ENCODE measurements at regions of chr2 and their contacts with region 1.

Region 1: GRCh38 chr2:139122711-139123158 is 342.5 kb upstream of the NXPH2 start:
- DNase-seq: peak in 1 of 4 experiments; percentile 5
- ATAC-seq: no peak
- H3K4me3 ChIP-seq: no peak overlapping the region
- H3K27ac ChIP-seq: no peak overlapping the region
- H3K4me1 ChIP-seq: no peaks in the 10 kb centered on the region
- H3K27me3 ChIP-seq: no peaks in the 10 kb centered on the region
- CTCF ChIP-seq: no peak
- EP300 ChIP-seq: no peak
- POLR2A ChIP-seq: no peak
- RAD21 ChIP-seq: no peak

Region 2: GRCh38 chr2:139891636-139892035 is 768.9 kb after region 1 on chr2:
- CTCF ChIA-PET with region 1: no interaction called
- POLR2A ChIA-PET with region 1: no interaction called
- in situ Hi-C with region 1: loop called (anchors 10 kb)
- intact Hi-C with region 1: no loop called
- DNase-seq: no peak
- ATAC-seq: no peak
- H3K4me3 ChIP-seq: no peak overlapping the region
- H3K27ac ChIP-seq: no peak overlapping the region
- H3K4me1 ChIP-seq: no peaks in the 10 kb centered on the region
- H3K27me3 ChIP-seq: no peaks in the 10 kb centered on the region
- CTCF ChIP-seq: no peak
- EP300 ChIP-seq: no peak
- POLR2A ChIP-seq: no peak
- RAD21 ChIP-seq: no peak

Region 3: DNA sequence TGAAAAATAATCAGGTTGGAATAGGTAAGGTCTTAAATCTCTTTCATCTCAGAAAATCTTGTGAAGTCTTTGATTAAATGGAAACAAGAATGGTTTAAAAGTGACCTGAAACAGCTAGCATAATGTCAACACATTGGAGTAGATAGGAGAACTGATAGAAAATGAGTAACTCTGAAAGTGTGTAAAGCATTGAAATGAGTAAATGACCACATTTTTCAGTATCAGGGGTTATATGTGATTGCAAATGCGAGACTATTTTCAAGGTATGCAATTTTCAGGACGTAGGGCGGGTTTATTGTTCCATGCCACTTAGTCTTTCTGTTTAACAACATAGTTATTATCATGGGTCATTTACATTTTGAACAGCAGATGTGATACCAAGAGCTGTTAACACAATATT is 1624.9 kb after region 1 on chr2:
- CTCF ChIA-PET with region 1: no interaction called
- POLR2A ChIA-PET with region 1: no interaction called
- in situ Hi-C with region 1: no loop called
- intact Hi-C with region 1: no loop called
- DNase-seq: no peak
- ATAC-seq: no peak
- H3K4me3 ChIP-seq: no peak overlapping the region
- H3K27ac ChIP-seq: no peak overlapping the region
- H3K4me1 ChIP-seq: no peaks in the 10 kb centered on the region
- H3K27me3 ChIP-seq: no peaks in the 10 kb centered on the region
- CTCF ChIP-seq: no peak
- EP300 ChIP-seq: no peak
- POLR2A ChIP-seq: no peak
- RAD21 ChIP-seq: no peak